HEK293 (cell line): ENCODE measurements at regions of chr4 and their contacts with region 1.

Region 1: GRCh38 chr4:82721819-82722423 is 76.7 kb downstream of the SCD5 start:
- H3K4me3 ChIP-seq: no peak overlapping the region
- H3K27ac ChIP-seq: no peak overlapping the region
- H3K4me1 ChIP-seq: no peaks in the 10 kb centered on the region
- CTCF ChIP-seq: no peak

Region 2: GRCh38 chr4:82823062-82823461 is 101.1 kb after region 1 on chr4:
- CTCF ChIA-PET with region 1: interaction called, 10 read pairs
- POLR2A ChIA-PET with region 1: no interaction called
- H3K4me3 ChIP-seq: no peak overlapping the region
- H3K27ac ChIP-seq: no peak overlapping the region
- H3K4me1 ChIP-seq: no peaks in the 10 kb centered on the region
- CTCF ChIP-seq: no peak